ENCODE measurements at regions of chr17 and their contacts with region 1.

Region 1: DNA sequence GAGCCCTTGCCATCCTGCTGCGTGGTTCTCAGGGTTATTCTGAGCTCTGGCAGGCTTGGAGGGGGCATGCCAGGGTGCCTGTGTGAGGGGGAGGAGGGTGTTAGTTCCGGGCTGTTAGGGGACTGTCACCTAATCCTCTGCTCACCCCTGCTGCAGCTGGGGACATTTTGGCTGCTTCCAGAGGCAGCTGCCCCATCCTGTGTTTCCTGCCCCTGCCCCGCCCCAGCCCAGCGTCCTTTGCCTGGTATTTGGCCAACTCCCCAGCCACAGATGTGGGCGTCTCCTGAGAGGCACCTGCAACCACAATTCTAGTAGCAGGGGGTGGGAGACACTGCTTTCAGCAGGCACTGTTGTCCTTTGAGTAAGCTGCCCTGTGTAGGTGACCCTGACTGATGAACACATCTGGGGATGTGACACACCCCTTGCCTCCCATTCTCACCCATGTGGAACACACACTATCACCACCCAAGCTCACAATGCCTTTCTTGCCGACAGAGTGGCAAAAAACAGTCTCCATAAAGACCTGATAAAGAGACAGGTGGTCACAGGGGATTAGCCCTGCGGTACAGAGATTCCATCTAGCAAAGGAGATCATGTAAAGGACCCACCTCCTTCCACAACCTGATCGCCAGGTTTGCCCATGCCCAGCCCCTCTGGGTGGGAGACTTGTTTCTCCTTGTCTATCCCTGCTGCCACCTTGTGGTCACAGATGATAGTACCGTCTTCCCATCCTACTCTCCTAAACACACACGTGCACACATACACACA is at the start of gene CHRNE:
- DNase-seq: peak; percentile 52
- ATAC-seq: peak; percentile 28
- total RNA-seq, gene CHRNE: 0.50 TPM

Region 2: DNA sequence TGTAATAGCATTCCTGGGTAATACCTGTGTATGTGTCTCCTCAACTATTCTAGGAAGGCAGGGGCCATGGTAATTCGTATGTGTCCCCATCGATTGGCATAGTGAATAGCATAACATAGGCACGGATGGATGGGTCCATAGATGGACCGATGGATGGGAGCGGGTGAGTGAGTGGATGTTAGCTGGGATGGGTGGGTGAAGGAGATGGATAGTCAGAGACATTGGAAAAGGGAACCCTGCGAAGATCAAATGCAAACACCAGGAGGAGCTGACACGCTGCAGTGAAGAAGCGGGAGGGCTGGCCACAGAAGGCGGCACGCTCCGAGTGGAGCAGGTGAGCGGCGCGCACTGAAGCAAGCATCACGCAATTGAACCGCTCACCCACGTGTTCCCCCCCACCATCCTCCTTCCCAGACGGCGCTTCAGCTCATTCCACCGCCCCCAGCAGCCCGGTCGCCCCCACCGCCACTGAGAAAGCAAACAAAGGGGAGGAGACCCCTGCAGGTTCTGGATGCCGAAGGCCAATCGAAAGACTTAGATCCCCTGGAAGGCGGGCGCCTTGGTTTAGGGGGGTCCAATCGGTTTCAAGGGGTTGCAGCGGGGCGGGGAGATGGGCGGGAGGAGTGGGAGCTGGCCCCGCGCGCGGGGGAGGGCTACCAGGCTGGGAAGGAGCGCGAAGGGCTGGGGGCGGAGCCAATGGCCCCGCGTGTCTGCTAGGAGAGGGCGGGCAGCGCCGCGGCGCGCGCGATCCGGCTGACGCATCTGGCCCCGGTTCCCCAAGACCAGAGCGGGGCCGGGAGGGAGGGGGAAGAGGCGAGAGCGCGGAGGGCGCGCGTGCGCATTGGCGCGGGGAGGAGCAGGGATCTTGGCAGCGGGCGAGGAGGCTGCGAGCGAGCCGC is 193.2 kb before region 1 on chr17 and contains the start of gene ARRB2:
- intact Hi-C with region 1: loop called (anchors 10 kb)
- DNase-seq: peak; percentile 99
- ATAC-seq: peak; percentile 93
- total RNA-seq, gene ARRB2: 35.0 TPM

Region 3: DNA sequence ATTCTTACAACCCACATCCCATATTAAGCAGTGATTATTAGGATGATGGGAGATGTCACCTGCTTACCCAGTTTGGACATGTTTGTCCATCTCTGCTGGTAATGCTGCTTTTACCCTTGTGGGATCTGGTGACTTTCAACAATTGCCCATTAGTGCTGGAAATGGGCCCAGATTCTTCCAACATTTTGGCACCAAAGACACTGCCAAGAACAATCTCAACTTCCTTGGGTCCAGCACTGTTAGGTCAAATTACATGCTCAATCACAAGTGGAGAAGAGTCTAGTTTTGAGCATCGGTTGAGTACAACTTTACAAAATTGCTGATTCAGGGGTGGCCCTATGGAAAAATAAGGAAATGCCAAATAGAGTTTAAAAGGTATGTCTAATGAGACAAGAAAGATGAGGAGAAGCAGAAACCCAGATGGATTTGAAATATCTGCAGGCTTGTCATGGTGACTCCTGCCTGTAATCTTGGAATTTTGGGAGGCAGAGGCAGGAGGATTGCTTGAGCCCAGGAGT is 162.1 kb after region 1 on chr17:
- intact Hi-C with region 1: loop called (anchors 10 kb)
- DNase-seq: no peak
- ATAC-seq: no peak

Measured in left ventricle myocardium superior (tissue), 1 donor.